ENCODE measurements at regions of chr9 and their contacts with region 1.

Region 1: DNA sequence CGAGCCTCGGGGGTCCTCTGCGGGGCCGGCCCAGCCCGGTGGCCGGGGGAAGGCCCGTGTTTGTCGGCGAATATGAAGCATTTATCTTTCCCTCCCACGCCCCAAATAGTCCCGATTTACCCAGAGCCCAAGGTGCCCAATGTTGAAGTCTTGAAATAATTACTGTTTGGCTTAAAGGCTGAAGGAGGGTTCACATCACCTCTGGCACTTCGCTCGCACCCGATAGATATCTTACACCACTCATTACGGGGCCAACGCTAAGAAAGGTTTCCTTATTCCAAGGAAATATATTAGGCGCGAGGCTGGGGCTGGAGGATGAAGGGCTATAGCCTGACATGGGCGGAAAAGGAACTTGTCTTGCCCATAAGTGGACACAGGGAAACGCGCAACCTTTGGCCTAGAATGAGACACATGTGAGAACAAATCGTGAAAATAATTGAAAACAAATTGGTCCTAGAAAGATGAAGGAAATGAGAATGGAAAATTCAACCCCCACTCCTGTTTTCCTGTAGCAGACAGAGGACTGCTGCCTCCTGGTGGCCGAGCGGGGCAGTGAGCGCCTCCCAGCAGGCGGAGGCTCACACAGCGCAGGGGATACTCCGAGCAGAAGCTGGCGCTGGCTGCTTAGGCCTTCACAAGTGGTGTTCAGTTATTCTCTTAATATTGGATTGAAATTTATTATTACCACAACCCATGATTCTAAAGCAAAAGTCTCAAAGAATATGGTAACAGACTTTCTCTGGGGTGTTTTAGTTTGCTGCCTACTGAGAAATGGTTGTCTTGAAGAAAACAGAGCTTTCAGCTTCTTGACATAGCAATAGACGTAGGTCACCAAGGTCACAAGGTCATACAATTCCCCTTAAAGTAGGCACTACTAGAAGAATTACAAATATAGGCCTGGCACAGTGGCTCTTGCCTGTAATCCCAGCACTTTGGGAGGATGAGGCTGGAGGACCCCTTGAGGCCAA is 7.9 kb downstream of the CCL21 start:
- DNase-seq: peak; percentile 81 to 90
- ATAC-seq: peak; percentile 87 to 96 (median 92)
- H3K4me3 ChIP-seq: peak overlapping the region; percentile 84
- H3K27ac ChIP-seq: peak overlapping the region; percentile 3
- H3K4me1 ChIP-seq: no peaks in the 10 kb centered on the region
- H3K27me3 ChIP-seq: peaks cover 0 to 4% (median 0%) of the 10 kb centered on the region in 3 donors
- CTCF ChIP-seq: peak; percentile 98

Region 2: DNA sequence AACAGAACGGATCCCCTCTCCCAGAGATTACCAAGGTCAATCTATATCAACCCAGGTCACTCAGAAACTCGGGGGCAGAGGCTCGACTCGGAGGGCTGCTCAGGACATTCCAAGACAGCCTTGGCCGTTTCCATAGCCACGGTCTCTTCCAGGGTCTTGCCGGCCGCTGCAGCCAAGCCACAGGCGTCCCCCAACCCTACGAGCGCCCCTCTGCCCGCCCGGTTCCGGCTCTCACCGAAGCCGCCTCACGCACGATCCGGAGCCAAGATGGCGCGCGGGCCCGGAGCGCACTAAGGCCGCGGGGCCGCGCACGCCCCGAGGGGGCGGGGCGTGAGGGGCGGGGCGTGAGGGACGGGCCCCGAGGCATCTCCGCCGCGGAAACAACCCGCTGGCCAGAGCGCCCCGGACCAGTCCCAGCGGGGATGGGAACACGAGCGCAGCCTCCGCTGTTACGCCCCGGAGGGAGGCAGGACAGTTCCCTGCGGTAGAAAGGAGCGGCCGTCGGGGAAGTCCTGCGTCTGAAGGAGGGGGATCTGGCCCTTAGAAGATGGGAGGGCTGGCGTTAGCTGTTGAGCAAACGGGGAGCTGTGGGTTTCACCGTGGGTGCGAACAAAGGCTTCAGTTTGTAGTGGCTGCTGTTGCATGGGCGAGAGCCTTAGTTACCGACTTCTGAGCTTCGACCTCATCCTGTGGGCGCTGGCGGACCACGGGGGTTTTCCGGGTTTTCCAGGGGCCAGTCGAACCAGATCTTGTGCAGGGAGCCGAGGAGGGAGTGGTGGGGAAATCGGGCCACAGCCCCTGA is 90.0 kb before region 1 on chr9 and contains the start of gene RPP25L:
- intact Hi-C with region 1: loop called in 1 of 2 experiments (anchors 5 kb)
- DNase-seq: peak; percentile 90 to 91
- ATAC-seq: peak; percentile 92 to 96 (median 95)
- H3K4me3 ChIP-seq: peak within 1 kb of the TSS; percentile 73
- H3K27ac ChIP-seq: peak within 1 kb of the TSS; percentile 84
- H3K4me1 ChIP-seq: peaks cover 26% of the 10 kb centered on the region
- H3K27me3 ChIP-seq: no peaks in the 10 kb centered on the region
- CTCF ChIP-seq: no peak
- total RNA-seq, gene RPP25L: 63.1 to 84.7 (median 68.3) TPM

Region 3: GRCh38 chr9:34646211-34647083 is 55.6 kb before region 1 on chr9 and contains the start of gene GALT:
- intact Hi-C with region 1: loop called in 1 of 2 experiments (anchors 5 kb)
- DNase-seq: peak; percentile 97
- ATAC-seq: peak; percentile 88 to 92 (median 90)
- H3K4me3 ChIP-seq: peak within 1 kb of the TSS; percentile 74
- H3K27ac ChIP-seq: peak within 1 kb of the TSS; percentile 81
- H3K4me1 ChIP-seq: peaks cover 21% of the 10 kb centered on the region
- H3K27me3 ChIP-seq: no peaks in the 10 kb centered on the region
- CTCF ChIP-seq: peak; percentile 28
- total RNA-seq, gene GALT: 16.5 to 40.6 (median 27.1) TPM

Region 4: DNA sequence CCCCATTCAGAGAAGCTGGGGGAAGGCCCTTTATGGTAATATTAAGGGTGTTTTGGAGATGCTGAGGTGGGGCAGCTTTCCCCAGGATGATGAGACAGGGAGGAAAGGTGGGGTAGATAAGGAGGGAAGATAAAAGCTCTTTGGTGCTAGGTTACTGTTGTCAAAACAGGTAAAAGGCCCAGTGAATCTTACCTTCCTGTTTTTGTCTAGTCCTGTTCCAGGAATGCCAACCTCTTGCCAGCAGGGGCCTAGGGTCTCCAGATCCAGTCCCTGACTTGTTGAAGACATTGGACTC is 38.8 kb before region 1 on chr9:
- intact Hi-C with region 1: loop called in 1 of 2 experiments (anchors 2 kb)
- DNase-seq: no peak
- ATAC-seq: no peak
- H3K4me3 ChIP-seq: no peak overlapping the region
- H3K27ac ChIP-seq: no peak overlapping the region
- H3K4me1 ChIP-seq: peaks cover 8% of the 10 kb centered on the region
- H3K27me3 ChIP-seq: no peaks in the 10 kb centered on the region
- CTCF ChIP-seq: no peak

Region 5: DNA sequence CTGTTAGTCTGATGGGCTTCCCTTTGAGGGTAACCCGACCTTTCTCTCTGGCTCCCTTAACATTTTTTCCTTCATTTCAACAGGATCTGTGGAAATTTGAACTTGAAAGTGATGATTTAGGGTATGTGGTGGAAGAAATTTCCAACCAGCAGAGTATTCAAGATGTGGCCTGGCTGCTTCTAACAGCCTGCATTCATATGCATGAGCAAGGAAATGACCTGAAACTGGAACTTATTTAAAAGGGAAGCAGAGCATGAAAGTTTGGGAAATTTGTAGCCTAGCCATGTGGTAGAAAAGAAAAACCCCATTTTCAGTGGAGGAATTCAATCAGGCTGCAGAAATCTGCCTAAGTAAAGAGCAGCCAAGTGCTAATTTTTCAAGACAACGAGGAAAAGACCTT is 501.5 kb after region 1 on chr9:
- intact Hi-C with region 1: no loop called
- DNase-seq: no peak
- ATAC-seq: no peak
- H3K4me3 ChIP-seq: no peak overlapping the region
- H3K27ac ChIP-seq: no peak overlapping the region
- H3K4me1 ChIP-seq: no peaks in the 10 kb centered on the region
- H3K27me3 ChIP-seq: no peaks in the 10 kb centered on the region
- CTCF ChIP-seq: no peak

Region 6: DNA sequence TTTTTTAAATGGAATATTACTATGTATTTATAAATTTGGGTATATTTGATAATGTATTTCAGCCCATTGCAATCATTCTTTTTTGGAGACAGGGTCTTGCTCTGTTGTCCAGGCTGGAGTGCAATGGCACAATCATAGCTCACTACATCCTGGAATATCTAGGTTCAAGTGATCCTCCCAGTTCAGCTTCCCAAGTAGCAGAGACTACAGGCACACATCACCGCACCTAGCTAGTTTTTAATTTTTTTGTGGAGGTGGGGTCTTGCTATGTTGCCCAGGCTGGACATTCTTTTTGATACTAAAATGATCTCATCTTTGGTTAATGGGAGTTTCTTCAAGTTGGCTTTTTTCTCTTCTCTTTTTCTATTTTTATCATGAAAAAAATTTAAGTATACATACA is 551.0 kb after region 1 on chr9:
- intact Hi-C with region 1: no loop called
- DNase-seq: no peak
- ATAC-seq: no peak
- H3K4me3 ChIP-seq: no peak overlapping the region
- H3K27ac ChIP-seq: no peak overlapping the region
- H3K4me1 ChIP-seq: no peaks in the 10 kb centered on the region
- H3K27me3 ChIP-seq: no peaks in the 10 kb centered on the region
- CTCF ChIP-seq: no peak